ENCODE measurements at regions of chr12 and their contacts with region 1.

Region 1: GRCh38 chr12:53321074-53321814 is at the start of gene AAAS:
- DNase-seq: peak; percentile 93
- ATAC-seq: peak; percentile 87
- H3K4me3 ChIP-seq: peak within 1 kb of the TSS; percentile 88
- H3K27ac ChIP-seq: peak within 1 kb of the TSS; percentile 87
- H3K4me1 ChIP-seq: peaks cover 22% of the 10 kb centered on the region
- H3K27me3 ChIP-seq: no peaks in the 10 kb centered on the region
- CTCF ChIP-seq: peak; percentile 96
- total RNA-seq, gene AAAS: 53.5 and 55.8 TPM in 2 replicates

Region 2: DNA sequence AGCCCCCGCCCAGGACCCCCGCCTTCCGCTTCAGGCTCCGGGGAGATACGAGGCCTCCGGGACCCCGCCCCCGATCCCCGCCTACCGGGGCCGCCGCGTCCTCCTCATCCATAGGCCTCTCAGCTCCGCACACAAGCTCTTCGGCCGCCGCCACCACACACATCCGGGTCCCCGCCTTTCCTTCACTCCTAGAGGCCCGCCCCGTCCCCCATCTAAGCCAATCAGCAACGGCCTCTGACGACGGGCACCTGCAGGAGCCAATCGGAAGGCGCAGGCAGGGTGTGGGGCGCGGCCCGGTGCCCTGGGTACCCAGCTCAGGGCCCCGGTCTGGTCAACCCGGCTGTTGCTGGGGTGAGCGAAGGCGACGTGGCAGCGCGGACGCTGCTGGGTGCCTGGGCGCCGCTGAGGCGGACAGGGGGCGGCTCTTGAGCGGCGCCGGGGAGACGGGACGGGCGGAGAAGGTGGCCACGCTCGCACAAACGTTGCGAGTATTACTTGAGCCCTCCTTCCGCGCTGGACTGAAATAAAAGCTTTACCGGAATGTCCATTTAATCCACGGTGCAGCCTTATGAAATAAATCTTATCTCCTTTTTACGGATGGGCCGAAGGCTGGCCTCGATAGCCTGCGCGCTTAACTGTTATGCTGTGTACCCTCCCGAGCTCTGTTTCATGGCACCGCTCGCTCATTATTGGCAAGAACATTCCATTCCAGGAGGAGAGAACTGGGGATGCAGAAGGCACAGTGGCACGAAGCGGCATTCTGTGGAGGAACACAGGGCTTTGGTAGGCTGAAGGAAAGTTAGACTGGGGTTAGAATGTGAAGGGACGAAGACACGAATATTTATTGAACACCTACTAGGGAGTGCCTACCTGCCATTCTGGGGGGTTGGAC is 241.8 kb before region 1 on chr12 and contains the start of gene SPRYD3:
- CTCF ChIA-PET with region 1: no interaction called
- POLR2A ChIA-PET with region 1: no interaction called
- intact Hi-C with region 1: no loop called
- DNase-seq: peak; percentile 97
- ATAC-seq: peak; percentile 96
- H3K4me3 ChIP-seq: peak within 1 kb of the TSS; percentile 76
- H3K27ac ChIP-seq: peak within 1 kb of the TSS; percentile 62
- H3K4me1 ChIP-seq: peaks cover 16% of the 10 kb centered on the region
- H3K27me3 ChIP-seq: no peaks in the 10 kb centered on the region
- CTCF ChIP-seq: no peak
- total RNA-seq, gene SPRYD3: 18.5 and 24.1 TPM in 2 replicates

Region 3: GRCh38 chr12:53180220-53180930 is 140.9 kb before region 1 on chr12 and contains the starts of genes CSAD and ZNF740:
- CTCF ChIA-PET with region 1: no interaction called
- POLR2A ChIA-PET with region 1: interaction called, 11 read pairs
- intact Hi-C with region 1: no loop called
- DNase-seq: peak; percentile 98
- ATAC-seq: peak; percentile 96
- H3K4me3 ChIP-seq: peak within 1 kb of the TSS; percentile 94
- H3K27ac ChIP-seq: peak within 1 kb of the TSS; percentile 90
- H3K4me1 ChIP-seq: peaks cover 37% of the 10 kb centered on the region
- H3K27me3 ChIP-seq: no peaks in the 10 kb centered on the region
- CTCF ChIP-seq: no peak
- total RNA-seq, gene CSAD: 21.5 and 23.8 TPM in 2 replicates
- total RNA-seq, gene ZNF740: 12.3 and 12.8 TPM in 2 replicates

Region 4: DNA sequence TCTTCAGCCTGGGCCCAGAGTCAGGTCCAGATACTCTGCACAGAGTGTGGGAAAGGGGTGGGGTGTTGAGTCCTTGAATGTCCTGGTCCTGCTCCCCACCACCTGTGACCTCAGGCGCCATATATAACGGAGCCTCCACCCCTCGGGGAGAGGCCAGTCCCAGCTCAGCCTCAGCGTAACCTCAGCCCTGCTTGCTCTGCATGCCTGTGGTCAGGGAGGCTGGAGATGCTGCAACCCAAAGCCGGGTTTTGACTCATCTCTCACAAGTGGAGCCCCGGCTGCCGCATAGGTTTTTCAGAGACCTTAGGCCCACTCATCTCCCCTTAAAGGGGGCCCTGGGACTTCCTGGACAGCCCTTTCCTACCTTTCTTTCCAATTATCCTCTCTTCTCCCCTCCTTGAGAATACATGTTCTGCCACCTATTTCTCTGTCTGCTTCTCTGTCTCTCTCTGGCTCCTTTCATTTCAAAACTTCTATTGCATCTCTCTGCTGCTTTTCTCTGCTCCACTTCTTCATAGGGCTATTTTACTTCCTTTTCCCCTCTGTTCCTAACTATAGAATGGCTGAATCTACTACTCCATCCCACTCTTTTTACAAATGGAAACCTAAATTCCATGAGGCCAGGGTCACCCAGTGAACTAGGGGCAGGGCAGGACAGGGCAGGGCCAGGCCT is 115.4 kb before region 1 on chr12:
- CTCF ChIA-PET with region 1: no interaction called
- POLR2A ChIA-PET with region 1: no interaction called
- intact Hi-C with region 1: no loop called
- DNase-seq: peak; percentile 74
- ATAC-seq: peak; percentile 80
- H3K4me3 ChIP-seq: no peak overlapping the region
- H3K27ac ChIP-seq: no peak overlapping the region
- H3K4me1 ChIP-seq: peaks cover 20% of the 10 kb centered on the region
- H3K27me3 ChIP-seq: no peaks in the 10 kb centered on the region
- CTCF ChIP-seq: no peak

Region 5: GRCh38 chr12:53220801-53221202 is 100.4 kb before region 1 on chr12:
- CTCF ChIA-PET with region 1: no interaction called
- POLR2A ChIA-PET with region 1: interaction called, 14 read pairs
- intact Hi-C with region 1: no loop called
- DNase-seq: peak; percentile 97
- ATAC-seq: peak; percentile 65
- H3K4me3 ChIP-seq: peak overlapping the region; percentile 80
- H3K27ac ChIP-seq: peak overlapping the region; percentile 95
- H3K4me1 ChIP-seq: peaks cover 60% of the 10 kb centered on the region
- H3K27me3 ChIP-seq: no peaks in the 10 kb centered on the region
- CTCF ChIP-seq: no peak

Region 6: GRCh38 chr12:53295070-53295890 is 26.0 kb before region 1 on chr12 and contains the start of gene PFDN5:
- CTCF ChIA-PET with region 1: interaction called, 10 read pairs
- POLR2A ChIA-PET with region 1: interaction called, 14 read pairs
- intact Hi-C with region 1: loop called (anchors 1 kb)
- DNase-seq: peak; percentile 88
- ATAC-seq: peak; percentile 81
- H3K4me3 ChIP-seq: peak within 1 kb of the TSS; percentile 96
- H3K27ac ChIP-seq: peak within 1 kb of the TSS; percentile 98
- H3K4me1 ChIP-seq: peaks cover 44% of the 10 kb centered on the region
- H3K27me3 ChIP-seq: no peaks in the 10 kb centered on the region
- CTCF ChIP-seq: no peak
- total RNA-seq, gene PFDN5: 476 and 519 TPM in 2 replicates

Region 7: DNA sequence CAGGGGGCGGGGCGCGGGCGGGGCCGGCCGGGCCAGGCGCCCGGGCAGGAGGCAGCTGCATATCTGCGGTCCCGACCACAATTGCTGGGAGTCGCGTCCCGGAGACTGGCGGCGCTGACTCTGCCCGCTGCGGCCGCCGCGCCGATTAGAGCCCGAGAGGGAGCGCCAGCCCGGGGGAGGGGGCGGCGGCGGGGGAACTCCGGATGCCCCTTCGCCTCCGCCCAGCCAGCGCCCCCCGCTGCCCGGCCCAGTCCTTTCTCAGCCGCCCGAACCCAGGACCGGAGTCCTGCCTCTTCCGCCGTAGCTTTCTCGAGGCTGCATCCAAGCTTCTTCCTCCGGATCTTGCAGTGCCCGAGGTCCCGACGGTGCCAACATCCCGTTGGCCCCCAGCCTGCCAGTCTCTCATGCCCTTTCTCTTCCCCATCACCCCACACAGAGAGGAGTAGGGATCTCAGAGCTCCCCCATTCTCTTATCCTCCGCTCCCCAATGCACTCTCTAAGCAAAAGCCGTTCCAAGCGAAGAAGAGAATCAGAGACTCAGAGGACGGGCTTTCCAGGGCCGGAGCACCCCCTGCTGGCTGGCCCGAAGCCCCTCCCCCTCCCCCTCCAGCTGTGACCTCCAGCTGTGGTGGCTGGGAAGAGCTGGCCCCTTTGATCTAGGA is 23.7 kb after region 1 on chr12:
- CTCF ChIA-PET with region 1: interaction called, 17 read pairs
- POLR2A ChIA-PET with region 1: interaction called, 8 read pairs
- intact Hi-C with region 1: loop called (anchors 1 kb)
- DNase-seq: peak; percentile 59
- ATAC-seq: peak; percentile 85
- H3K4me3 ChIP-seq: peak overlapping the region; percentile 76
- H3K27ac ChIP-seq: no peak overlapping the region
- H3K4me1 ChIP-seq: peaks cover 3% of the 10 kb centered on the region; the same call in 1 of the 2 replicates
- H3K27me3 ChIP-seq: no peaks in the 10 kb centered on the region
- CTCF ChIP-seq: peak; percentile 79

Region 8: GRCh38 chr12:53508534-53509199 is 187.4 kb after region 1 on chr12:
- CTCF ChIA-PET with region 1: interaction called, 5 read pairs
- POLR2A ChIA-PET with region 1: no interaction called
- intact Hi-C with region 1: loop called (anchors 2 kb)
- DNase-seq: peak; percentile 94
- ATAC-seq: peak; percentile 79
- H3K4me3 ChIP-seq: no peak overlapping the region
- H3K27ac ChIP-seq: no peak overlapping the region
- H3K4me1 ChIP-seq: peaks cover 17% of the 10 kb centered on the region
- H3K27me3 ChIP-seq: no peaks in the 10 kb centered on the region
- CTCF ChIP-seq: peak; percentile 93

Measured in PC-3 (cell line).